Adrenal gland (tissue), 19 donors: ENCODE measurements at regions of chr15 and their contacts with region 1.

Region 1: DNA sequence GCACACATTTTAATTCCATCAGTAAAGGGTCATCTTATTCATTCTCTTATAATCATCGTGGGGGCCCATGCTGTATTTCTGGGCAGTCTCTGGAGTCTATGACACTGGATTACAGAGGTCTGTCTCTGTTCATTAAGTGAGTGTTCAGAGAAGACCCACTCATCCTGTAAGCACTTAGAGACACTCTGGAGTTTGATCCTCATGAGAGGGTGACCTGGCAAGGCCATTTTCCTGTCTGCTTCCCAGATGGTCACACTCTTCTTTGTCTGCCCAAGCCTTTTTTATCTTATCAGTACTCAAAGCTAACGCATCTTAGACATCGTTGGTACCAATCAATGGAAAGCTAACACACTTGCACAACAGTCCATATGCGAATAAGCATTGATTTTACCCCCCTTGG is 333.1 kb downstream of the RORA start:
- DNase-seq: no peak
- H3K4me3 ChIP-seq: no peak overlapping the region
- H3K27ac ChIP-seq: no peak overlapping the region
- H3K4me1 ChIP-seq: no peaks in the 10 kb centered on the region
- H3K27me3 ChIP-seq: no peaks in the 10 kb centered on the region
- CTCF ChIP-seq: no peak
- POLR2A ChIP-seq: no peak

Region 2: GRCh38 chr15:60819860-60820259 is 76.1 kb before region 1 on chr15:
- intact Hi-C with region 1: loop called in 1 of 2 experiments (anchors 2 kb)
- DNase-seq: no peak
- H3K4me3 ChIP-seq: no peak overlapping the region
- H3K27ac ChIP-seq: no peak overlapping the region
- H3K4me1 ChIP-seq: no peaks in the 10 kb centered on the region
- H3K27me3 ChIP-seq: no peaks in the 10 kb centered on the region
- CTCF ChIP-seq: no peak
- POLR2A ChIP-seq: no peak

Region 3: DNA sequence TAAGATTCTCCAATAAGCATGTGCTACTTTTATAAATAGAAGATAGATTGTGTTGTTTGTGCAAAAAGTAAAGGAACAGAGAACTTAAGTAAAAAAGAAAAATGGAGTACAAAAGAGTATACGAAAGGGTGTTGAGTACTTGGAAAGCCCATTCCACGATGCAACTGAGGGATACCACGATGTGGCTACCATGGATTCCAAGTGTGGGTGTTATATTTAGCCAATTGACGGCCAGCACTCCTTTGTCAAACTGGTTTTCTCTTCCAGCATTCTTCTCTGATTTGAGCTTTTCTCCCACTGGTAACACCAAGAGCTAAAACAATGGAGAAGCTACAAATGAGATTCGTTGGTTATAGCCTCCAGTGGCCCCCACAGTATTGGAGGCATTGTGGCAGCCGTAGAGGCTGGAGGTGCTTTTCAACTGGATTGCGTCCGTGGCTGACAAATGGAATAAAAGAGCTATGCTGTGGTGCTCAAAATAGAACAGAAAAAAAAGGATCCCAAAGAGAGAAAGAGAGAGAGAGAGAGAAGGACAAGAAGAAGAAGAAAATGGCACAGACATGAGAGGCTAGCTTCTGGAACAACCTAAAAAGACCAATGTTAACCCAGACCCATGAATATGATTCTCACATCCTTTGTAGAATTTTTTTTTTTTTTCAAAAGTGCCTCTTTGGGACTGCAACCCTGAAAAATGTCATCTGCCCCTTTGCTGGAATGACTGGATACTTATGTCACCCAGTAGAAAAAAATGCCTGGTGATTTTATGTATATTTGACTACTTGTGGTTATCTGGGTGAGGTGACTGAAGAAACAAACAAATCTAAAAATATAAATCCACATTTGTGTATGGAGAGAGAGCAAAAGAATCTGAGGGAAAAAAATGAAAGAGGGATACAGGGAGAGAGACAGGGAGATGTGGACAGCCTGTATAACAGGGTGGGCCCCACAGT is 12.0 kb before region 1 on chr15:
- intact Hi-C with region 1: loop called in 1 of 2 experiments (anchors 2 kb)
- DNase-seq: no peak
- H3K4me3 ChIP-seq: no peak overlapping the region
- H3K27ac ChIP-seq: no peak overlapping the region
- H3K4me1 ChIP-seq: peaks cover 0 to 6% of the 10 kb centered on the region in 2 donors
- H3K27me3 ChIP-seq: no peaks in the 10 kb centered on the region
- CTCF ChIP-seq: no peak
- POLR2A ChIP-seq: no peak